K562 (cell line): ENCODE measurements at regions of chr2 and their contacts with region 1.

Region 1: GRCh38 chr2:95022309-95023221 is 2.9 kb upstream of the MAL start:
- DNase-seq: peak; percentile 70 to 79 (median 75)
- ATAC-seq: peak; percentile 97
- H3K4me3 ChIP-seq: no peak overlapping the region
- H3K27ac ChIP-seq: no peak overlapping the region
- H3K4me1 ChIP-seq: peaks cover 0 to 22% of the 10 kb centered on the region in 2 experiments; a peak in 2 of 5 replicates
- H3K27me3 ChIP-seq: peaks cover 23 to 89% of the 10 kb centered on the region in 2 experiments
- CTCF ChIP-seq: peak; percentile 87 to 88 (median 88)
- EP300 ChIP-seq: no peak
- POLR2A ChIP-seq: no peak
- RAD21 ChIP-seq: peak; percentile 48 to 76

Region 2: GRCh38 chr2:94947097-94948016 is 75.2 kb before region 1 on chr2:
- CTCF ChIA-PET with region 1: no interaction called
- POLR2A ChIA-PET with region 1: no interaction called
- in situ Hi-C with region 1: no loop called
- intact Hi-C with region 1: no loop called
- DNase-seq: peak in 1 of 4 experiments; percentile 31
- ATAC-seq: peak; percentile 76
- H3K4me3 ChIP-seq: peak overlapping the region; percentile 12; the same call in 1 of the 2 replicates
- H3K27ac ChIP-seq: no peak overlapping the region; the same call in 2 of the 3 replicates
- H3K4me1 ChIP-seq: no peaks in the 10 kb centered on the region
- H3K27me3 ChIP-seq: peaks cover 3 to 16% of the 10 kb centered on the region in 2 experiments; a peak in 3 of 5 replicates
- CTCF ChIP-seq: 0 out of 6 replicates have a peak, but pooled peaks of 1 of the 3 experiments have one; percentile 2
- EP300 ChIP-seq: no peak
- POLR2A ChIP-seq: peak; percentile 42; the same call in 1 of the 2 replicates
- RAD21 ChIP-seq: no peak

Region 3: DNA sequence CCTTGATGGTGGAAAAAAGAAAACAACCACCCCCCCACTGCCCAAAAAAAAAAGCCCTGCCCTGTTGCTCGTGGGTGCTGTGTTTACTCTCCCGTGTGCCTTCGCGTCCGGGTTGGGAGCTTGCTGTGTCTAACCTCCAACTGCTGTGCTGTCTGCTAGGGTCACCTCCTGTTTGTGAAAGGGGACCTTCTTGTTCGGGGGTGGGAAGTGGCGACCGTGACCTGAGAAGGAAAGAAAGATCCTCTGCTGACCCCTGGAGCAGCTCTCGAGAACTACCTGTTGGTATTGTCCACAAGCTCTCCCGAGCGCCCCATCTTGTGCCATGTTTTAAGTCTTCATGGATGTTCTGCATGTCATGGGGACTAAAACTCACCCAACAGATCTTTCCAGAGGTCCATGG is 31.0 kb after region 1 on chr2:
- CTCF ChIA-PET with region 1: no interaction called
- POLR2A ChIA-PET with region 1: no interaction called
- in situ Hi-C with region 1: no loop called
- intact Hi-C with region 1: loop called (anchors 1 kb)
- DNase-seq: peak in 2 of 4 experiments; percentile 33 to 43
- ATAC-seq: peak; percentile 81
- H3K4me3 ChIP-seq: no peak overlapping the region
- H3K27ac ChIP-seq: no peak overlapping the region
- H3K4me1 ChIP-seq: no peaks in the 10 kb centered on the region
- H3K27me3 ChIP-seq: peaks cover 9 to 72% of the 10 kb centered on the region in 2 experiments
- CTCF ChIP-seq: peak; percentile 54 to 64 (median 62)
- EP300 ChIP-seq: no peak
- POLR2A ChIP-seq: no peak
- RAD21 ChIP-seq: peak; percentile 16 to 50; a peak in 1 of 4 replicates

Region 4: DNA sequence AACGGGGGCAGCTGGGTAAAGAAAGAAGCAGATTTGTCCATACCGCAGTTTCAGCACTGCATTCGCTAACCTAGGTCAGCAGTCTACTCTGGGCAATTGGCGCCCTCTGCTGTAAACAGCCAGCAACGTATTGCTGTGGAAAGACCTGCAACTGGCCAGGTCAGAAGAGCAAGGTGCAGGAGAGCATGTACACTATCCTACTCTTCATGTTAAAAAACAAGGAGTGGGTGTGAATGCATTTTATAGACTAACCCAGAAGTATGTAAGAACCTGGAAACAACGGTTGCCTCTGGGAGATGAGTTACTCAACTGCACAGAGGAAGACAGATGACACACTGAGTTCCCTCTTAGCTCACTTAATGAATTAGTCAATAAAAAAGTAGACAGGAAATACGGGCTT is 92.9 kb after region 1 on chr2:
- CTCF ChIA-PET with region 1: no interaction called
- POLR2A ChIA-PET with region 1: no interaction called
- in situ Hi-C with region 1: no loop called
- intact Hi-C with region 1: loop called (anchors 1 kb)
- DNase-seq: peak; percentile 47 to 69 (median 56)
- ATAC-seq: peak; percentile 98
- H3K4me3 ChIP-seq: no peak overlapping the region
- H3K27ac ChIP-seq: no peak overlapping the region
- H3K4me1 ChIP-seq: peaks cover 6% of the 10 kb centered on the region in 2 experiments; a peak in 4 of 5 replicates
- H3K27me3 ChIP-seq: no peaks in the 10 kb centered on the region
- CTCF ChIP-seq: peak; percentile 70 to 75 (median 75)
- EP300 ChIP-seq: no peak
- POLR2A ChIP-seq: no peak
- RAD21 ChIP-seq: peak in 1 of 2 experiments; percentile 55; a peak in 2 of 4 replicates

Region 5: DNA sequence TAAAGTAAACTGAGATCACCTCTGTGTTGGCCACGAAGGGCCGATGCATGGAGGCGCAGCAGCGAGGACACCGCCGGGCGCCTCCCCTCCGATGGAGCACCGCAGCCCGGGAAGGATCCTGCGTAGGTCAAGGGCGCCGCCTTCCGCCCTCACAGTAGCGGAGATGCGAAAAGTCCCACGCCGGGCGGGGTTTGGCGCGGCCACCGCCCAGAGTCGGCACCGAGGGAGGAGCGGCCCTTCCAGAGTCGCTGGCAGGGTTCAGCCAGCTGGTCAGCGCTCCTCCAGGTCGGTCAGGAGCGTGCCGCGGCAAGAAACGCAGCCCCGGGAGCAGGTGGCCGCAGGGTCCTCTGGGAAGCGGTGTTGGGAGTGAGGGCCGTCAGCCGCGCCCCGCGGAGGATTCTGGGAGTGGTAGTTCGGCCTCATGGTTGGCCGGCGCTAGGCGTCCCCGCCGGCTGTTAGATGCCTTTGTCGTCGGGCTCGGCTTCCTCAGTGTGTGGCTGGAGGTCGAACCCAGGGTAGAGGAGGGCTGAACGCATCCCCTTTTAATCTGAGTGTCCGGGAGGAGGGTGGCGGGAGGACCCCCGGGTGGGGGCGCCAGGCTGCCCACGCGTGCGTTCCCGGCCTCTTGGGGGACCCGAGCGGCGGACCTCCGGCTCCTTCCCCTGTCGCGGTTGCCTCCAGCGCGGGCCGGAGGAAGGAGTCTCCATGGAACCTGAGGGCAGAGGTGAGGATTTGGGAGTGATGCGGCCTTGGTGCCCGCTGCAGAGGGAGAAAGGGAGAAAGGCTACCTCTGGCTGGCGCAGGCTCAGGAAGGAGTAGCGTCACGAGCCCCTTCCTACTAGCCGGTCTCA is 184.8 kb after region 1 on chr2 and contains the start of gene ZNF892:
- CTCF ChIA-PET with region 1: no interaction called
- POLR2A ChIA-PET with region 1: no interaction called
- in situ Hi-C with region 1: no loop called
- intact Hi-C with region 1: loop called (anchors 2 kb)
- DNase-seq: peak; percentile 75 to 85 (median 80)
- ATAC-seq: peak; percentile 99
- H3K4me3 ChIP-seq: peak within 1 kb of the TSS; percentile 54
- H3K27ac ChIP-seq: 0 out of 3 replicates have a peak within 1 kb of the TSS, but pooled peaks have one; percentile 29
- H3K4me1 ChIP-seq: peaks cover 0 to 10% of the 10 kb centered on the region in 2 experiments; a peak in 2 of 5 replicates
- H3K27me3 ChIP-seq: no peaks in the 10 kb centered on the region
- CTCF ChIP-seq: peak; percentile 68 to 83 (median 81)
- EP300 ChIP-seq: no peak
- POLR2A ChIP-seq: no peak
- RAD21 ChIP-seq: peak; percentile 70 to 73
- polyA plus RNA-seq, gene ZNF892: not detected